ENCODE measurements at regions of chr18 and their contacts with region 1.

Region 1: DNA sequence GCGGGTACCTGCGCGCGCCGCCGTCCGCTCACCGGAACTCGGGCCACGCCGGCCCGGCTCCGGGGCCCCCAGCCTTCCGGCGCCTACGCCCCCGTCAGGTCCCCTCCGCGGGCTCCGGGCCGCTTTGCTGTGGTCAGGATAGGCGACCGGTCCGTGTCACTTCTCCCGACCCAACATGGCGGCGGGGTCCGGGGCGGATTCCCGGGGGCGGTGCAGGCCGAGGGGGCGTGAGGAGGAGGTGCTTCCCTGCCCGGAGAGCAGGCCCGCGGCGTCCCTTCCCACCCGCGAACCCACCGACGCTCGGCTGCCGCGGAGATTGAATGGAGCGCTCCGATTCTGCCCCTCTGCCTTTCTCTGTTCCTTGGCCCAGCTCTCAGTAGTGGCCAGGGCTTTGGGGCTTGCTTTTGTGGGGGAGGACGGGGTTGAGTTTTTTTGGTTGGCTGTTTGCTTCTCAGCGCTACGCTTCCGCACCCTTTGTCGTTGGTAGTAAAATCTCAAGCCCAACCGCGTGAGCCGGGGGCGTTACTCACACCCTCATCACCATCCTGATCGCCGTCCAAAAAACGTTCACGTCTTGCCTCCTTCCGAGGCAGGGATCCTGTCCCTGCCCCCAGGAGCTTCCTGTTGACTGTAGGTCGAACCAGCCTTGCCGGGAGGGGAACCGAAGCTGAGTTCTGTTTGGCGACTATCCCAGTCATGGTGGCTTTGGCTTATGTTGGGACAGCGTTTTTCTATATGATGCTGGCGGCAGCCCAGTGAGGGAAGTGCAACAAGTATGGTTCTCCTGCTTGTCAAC is 532 bp upstream of the YES1 start:
- DNase-seq: peak; percentile 87
- H3K4me3 Mint-ChIP-seq: peak overlapping the region; percentile 95
- H3K27ac Mint-ChIP-seq: peak overlapping the region; percentile 99
- H3K4me1 Mint-ChIP-seq: peaks cover 26% of the 10 kb centered on the region
- H3K27me3 Mint-ChIP-seq: no peaks in the 10 kb centered on the region
- CTCF ChIP-seq: no peak

Region 2: GRCh38 chr18:741931-742512 is 70.6 kb before region 1 on chr18:
- CTCF ChIA-PET with region 1: interaction called, 4 read pairs
- POLR2A ChIA-PET with region 1: interaction called, 3 read pairs
- intact Hi-C with region 1: loop called (anchors 5 kb)
- DNase-seq: peak; percentile 45
- H3K4me3 Mint-ChIP-seq: no peak overlapping the region
- H3K27ac Mint-ChIP-seq: no peak overlapping the region
- H3K4me1 Mint-ChIP-seq: peaks cover 6% of the 10 kb centered on the region
- H3K27me3 Mint-ChIP-seq: no peaks in the 10 kb centered on the region
- CTCF ChIP-seq: peak; percentile 72

Region 3: DNA sequence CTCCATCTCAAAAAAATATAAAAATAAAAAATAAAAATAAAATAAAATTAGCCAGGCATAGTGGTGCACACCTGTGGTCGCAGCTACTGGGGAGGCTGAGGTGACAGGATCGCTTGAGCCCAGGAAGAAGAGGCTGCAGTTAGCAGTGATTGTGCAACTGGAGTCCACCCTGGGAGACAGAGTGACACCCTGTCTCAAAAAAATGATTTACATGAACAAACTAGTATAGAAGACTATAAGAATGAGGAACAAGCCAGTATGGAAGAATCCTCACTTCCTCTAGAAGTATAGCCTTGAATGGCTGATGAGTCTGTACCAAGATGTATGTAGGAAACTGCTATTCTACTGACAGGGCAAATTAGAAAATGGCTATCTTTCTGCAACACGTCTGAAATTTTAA is 11.4 kb before region 1 on chr18:
- CTCF ChIA-PET with region 1: interaction called, 4 read pairs
- POLR2A ChIA-PET with region 1: interaction called, 27 read pairs
- intact Hi-C with region 1: no loop called
- DNase-seq: no peak
- H3K4me3 Mint-ChIP-seq: no peak overlapping the region
- H3K27ac Mint-ChIP-seq: no peak overlapping the region
- H3K4me1 Mint-ChIP-seq: peaks cover 18% of the 10 kb centered on the region
- H3K27me3 Mint-ChIP-seq: no peaks in the 10 kb centered on the region
- CTCF ChIP-seq: no peak

Region 4: GRCh38 chr18:824179-824578 is 11.6 kb after region 1 on chr18:
- CTCF ChIA-PET with region 1: interaction called, 5 read pairs
- POLR2A ChIA-PET with region 1: interaction called, 16 read pairs
- intact Hi-C with region 1: no loop called
- DNase-seq: peak; percentile 51
- H3K4me3 Mint-ChIP-seq: no peak overlapping the region
- H3K27ac Mint-ChIP-seq: peak overlapping the region; percentile 69
- H3K4me1 Mint-ChIP-seq: peaks cover 5% of the 10 kb centered on the region
- H3K27me3 Mint-ChIP-seq: no peaks in the 10 kb centered on the region
- CTCF ChIP-seq: no peak

Region 5: GRCh38 chr18:1191341-1191740 is 378.8 kb after region 1 on chr18:
- CTCF ChIA-PET with region 1: no interaction called
- POLR2A ChIA-PET with region 1: no interaction called
- intact Hi-C with region 1: no loop called
- DNase-seq: no peak
- H3K4me3 Mint-ChIP-seq: no peak overlapping the region
- H3K27ac Mint-ChIP-seq: no peak overlapping the region
- H3K4me1 Mint-ChIP-seq: no peaks in the 10 kb centered on the region
- H3K27me3 Mint-ChIP-seq: no peaks in the 10 kb centered on the region
- CTCF ChIP-seq: no peak